Endothelial cell of umbilical vein (primary cell): ENCODE measurements at regions of chr2 and their contacts with region 1.

Region 1: DNA sequence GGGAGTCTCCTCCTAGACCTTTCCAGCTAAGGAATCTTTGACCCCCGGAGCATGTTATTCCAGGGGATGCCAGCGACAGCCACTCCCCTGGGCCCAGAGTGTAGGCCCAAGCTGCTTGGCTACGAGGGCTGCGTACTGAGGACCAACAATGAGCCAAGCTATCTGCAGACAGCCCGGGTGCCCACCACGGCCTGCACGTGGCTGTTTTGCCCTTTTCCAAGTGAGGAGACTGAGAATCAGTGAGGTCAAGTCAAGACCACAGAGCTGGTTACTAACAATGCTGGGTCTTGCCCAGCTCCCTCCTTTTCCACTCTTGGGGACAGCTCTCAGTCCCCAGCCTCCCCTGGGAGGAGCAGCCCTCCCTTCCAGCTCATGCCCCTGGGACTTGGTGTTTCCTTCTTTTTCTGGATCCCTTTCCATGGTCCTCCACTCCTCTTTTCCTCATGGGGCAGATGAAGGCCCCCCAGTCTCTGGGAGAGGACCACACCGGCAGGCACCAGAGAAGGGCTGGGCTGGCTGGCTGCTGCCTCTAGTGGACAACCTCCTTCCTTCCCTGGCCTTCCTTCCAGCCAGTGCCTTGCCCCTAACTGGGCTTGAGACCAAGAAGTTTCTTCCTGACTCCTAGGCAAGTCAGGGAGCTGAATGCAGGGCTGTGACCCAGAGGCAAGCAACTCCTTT is 550 bp upstream of the MALL start:
- DNase-seq: peak; percentile 77
- H3K4me3 ChIP-seq: peak overlapping the region in 2 of 3 experiments; percentile 66 to 82
- H3K27ac ChIP-seq: peak overlapping the region; percentile 30
- H3K4me1 ChIP-seq: peaks cover 37% of the 10 kb centered on the region
- H3K27me3 ChIP-seq: no peaks in the 10 kb centered on the region
- CTCF ChIP-seq: peak; percentile 81 to 89
- POLR2A ChIP-seq: peak; percentile 61

Region 2: DNA sequence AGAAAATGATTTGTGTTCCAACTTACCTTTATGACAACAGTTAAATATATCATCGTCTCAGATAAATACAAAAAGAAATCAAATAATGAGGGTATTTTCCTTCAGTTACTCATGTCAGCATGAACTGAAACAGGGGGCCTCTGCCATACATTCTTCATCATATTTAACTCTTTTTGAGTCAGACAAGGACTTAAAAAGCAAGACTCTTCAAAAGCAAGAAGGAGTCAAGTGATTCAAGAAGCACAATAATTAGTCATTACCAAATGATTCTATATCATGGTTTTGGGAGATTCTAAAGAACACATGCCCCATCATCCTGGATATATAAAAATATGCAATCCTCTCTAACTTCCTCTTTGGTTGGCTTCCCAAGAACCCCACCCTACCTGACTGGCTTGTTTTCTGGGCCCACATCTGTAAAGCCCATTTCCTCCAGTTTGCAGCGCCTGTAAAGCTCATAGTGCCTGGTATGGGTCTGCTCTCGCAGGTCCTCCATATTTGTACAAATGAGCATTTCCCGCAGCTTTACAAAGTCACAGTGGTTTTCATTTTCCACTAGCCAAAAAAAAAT is 552.1 kb before region 1 on chr2:
- CTCF ChIA-PET with region 1: no interaction called
- POLR2A ChIA-PET with region 1: no interaction called
- dilution Hi-C with region 1: no loop called
- intact Hi-C with region 1: no loop called
- DNase-seq: no peak
- H3K4me3 ChIP-seq: no peak overlapping the region
- H3K27ac ChIP-seq: peak overlapping the region; percentile 12
- H3K4me1 ChIP-seq: peaks cover 35% of the 10 kb centered on the region
- H3K27me3 ChIP-seq: no peaks in the 10 kb centered on the region
- CTCF ChIP-seq: no peak
- POLR2A ChIP-seq: no peak

Region 3: GRCh38 chr2:110101280-110101844 is 14.8 kb before region 1 on chr2:
- CTCF ChIA-PET with region 1: interaction called, 51 read pairs
- POLR2A ChIA-PET with region 1: interaction called, 4 read pairs
- dilution Hi-C with region 1: no loop called
- intact Hi-C with region 1: loop called (anchors 1 kb)
- DNase-seq: peak; percentile 100
- H3K4me3 ChIP-seq: no peak overlapping the region
- H3K27ac ChIP-seq: peak overlapping the region; percentile 98
- H3K4me1 ChIP-seq: peaks cover 69% of the 10 kb centered on the region
- H3K27me3 ChIP-seq: no peaks in the 10 kb centered on the region
- CTCF ChIP-seq: no peak
- POLR2A ChIP-seq: peak; percentile 67

Region 4: GRCh38 chr2:110140401-110140800 is 24.2 kb after region 1 on chr2:
- CTCF ChIA-PET with region 1: interaction called, 10 read pairs
- POLR2A ChIA-PET with region 1: no interaction called
- dilution Hi-C with region 1: no loop called
- intact Hi-C with region 1: no loop called
- DNase-seq: no peak
- H3K4me3 ChIP-seq: no peak overlapping the region
- H3K27ac ChIP-seq: no peak overlapping the region
- H3K4me1 ChIP-seq: no peaks in the 10 kb centered on the region
- H3K27me3 ChIP-seq: no peaks in the 10 kb centered on the region
- CTCF ChIP-seq: no peak
- POLR2A ChIP-seq: no peak

Region 5: DNA sequence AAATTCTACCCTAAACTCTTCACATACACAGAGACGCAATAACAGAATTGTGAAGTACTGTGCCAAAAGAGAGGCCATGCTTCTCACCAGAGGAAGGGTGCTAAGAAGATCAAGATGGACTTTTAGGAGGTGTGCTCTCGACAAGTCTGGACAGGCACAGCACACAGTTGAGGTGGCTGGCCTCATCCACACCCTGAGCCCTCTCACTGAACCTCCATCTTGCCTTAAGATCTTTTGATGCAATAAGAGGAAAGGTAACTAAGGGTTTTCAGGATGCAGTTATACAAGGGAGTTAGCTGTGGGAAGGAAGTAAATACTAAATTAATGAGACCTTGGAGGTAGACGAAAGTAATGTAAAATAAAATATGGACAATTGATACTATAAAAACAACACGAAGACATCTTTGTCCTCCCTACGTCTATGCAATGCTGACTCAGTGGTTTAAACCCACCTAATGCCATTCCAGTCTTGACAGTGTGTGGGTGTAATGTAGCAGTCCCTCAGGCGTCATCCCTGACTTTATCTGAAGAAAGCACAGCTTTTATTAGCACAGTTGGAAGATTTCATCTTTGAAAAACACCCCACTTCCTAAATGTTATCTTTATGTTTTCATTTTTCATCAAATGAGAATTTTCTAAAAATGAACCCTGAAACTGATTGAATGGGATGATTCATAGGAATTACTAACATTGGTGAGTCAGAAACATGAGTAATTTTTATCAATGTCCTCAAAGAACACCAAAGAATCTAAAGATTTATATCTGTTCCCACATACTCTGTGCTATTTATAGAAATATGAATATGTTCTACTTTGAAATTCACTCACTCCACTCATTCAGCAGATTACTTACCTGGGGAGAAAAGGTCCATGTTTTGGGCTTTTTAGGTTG is 33.4 kb after region 1 on chr2:
- CTCF ChIA-PET with region 1: interaction called, 10 read pairs
- POLR2A ChIA-PET with region 1: interaction called, 3 read pairs
- dilution Hi-C with region 1: no loop called
- intact Hi-C with region 1: loop called (anchors 1 kb)
- DNase-seq: peak; percentile 95
- H3K4me3 ChIP-seq: peak overlapping the region in 1 of 3 experiments; percentile 8
- H3K27ac ChIP-seq: peak overlapping the region; percentile 91
- H3K4me1 ChIP-seq: peaks cover 42% of the 10 kb centered on the region
- H3K27me3 ChIP-seq: no peaks in the 10 kb centered on the region
- CTCF ChIP-seq: no peak
- POLR2A ChIP-seq: peak; percentile 58

Region 6: GRCh38 chr2:110157153-110157793 is 41.1 kb after region 1 on chr2:
- CTCF ChIA-PET with region 1: interaction called, 29 read pairs
- POLR2A ChIA-PET with region 1: no interaction called
- dilution Hi-C with region 1: no loop called
- intact Hi-C with region 1: loop called (anchors 1 kb)
- DNase-seq: peak; percentile 78
- H3K4me3 ChIP-seq: no peak overlapping the region
- H3K27ac ChIP-seq: peak overlapping the region; percentile 82
- H3K4me1 ChIP-seq: peaks cover 29% of the 10 kb centered on the region
- H3K27me3 ChIP-seq: no peaks in the 10 kb centered on the region
- CTCF ChIP-seq: peak; percentile 68 to 74
- POLR2A ChIP-seq: no peak

Region 7: DNA sequence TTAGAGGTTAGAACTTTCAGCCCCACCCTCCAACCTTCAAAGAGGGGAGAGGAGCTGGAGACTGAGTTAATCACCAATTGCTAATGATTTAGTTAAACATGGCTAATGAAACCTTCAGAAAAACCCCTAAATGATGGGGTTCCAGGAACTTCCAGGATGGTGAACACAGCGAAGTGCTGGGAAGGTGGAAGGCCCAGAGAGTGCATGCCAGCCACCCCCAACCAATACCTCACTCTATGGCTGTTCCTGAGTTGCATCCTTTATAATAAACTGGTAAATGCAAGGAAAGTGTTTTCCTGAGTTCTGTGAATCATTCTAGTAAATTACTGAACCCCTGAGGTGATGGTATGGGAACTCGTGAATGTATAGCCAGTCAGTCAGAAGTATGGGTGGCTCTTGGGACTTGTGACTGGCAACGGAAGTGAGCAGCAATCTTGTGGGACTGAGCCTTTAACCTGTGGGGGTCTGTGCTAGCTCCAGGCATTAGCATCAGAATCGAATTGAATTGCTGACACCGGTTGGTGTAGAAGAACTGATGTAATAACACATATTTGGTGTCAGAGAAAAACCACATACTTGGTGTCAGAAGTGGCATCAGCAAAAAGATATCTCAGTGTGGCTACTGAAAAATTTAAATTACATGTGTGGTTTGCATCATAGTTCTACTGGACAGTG is 51.3 kb after region 1 on chr2:
- CTCF ChIA-PET with region 1: interaction called, 10 read pairs
- POLR2A ChIA-PET with region 1: no interaction called
- dilution Hi-C with region 1: no loop called
- intact Hi-C with region 1: no loop called
- DNase-seq: no peak
- H3K4me3 ChIP-seq: no peak overlapping the region
- H3K27ac ChIP-seq: no peak overlapping the region
- H3K4me1 ChIP-seq: peaks cover 10% of the 10 kb centered on the region
- H3K27me3 ChIP-seq: no peaks in the 10 kb centered on the region
- CTCF ChIP-seq: no peak
- POLR2A ChIP-seq: no peak